A549 (cell line): ENCODE measurements at regions of chr16 and their contacts with region 1.

Region 1: GRCh38 chr16:67928561-67929364 is 2.9 kb downstream of the CTRL start:
- DNase-seq: peak; percentile 66 to 91
- ATAC-seq: peak; percentile 70 to 88
- H3K4me3 ChIP-seq: no peak overlapping the region
- H3K27ac ChIP-seq: no peak overlapping the region
- H3K4me1 ChIP-seq: no peaks in the 10 kb centered on the region
- CTCF ChIP-seq: peak; percentile 87
- EP300 ChIP-seq: no peak
- POLR2A ChIP-seq: no peak
- RAD21 ChIP-seq: peak; percentile 80 to 90

Region 2: DNA sequence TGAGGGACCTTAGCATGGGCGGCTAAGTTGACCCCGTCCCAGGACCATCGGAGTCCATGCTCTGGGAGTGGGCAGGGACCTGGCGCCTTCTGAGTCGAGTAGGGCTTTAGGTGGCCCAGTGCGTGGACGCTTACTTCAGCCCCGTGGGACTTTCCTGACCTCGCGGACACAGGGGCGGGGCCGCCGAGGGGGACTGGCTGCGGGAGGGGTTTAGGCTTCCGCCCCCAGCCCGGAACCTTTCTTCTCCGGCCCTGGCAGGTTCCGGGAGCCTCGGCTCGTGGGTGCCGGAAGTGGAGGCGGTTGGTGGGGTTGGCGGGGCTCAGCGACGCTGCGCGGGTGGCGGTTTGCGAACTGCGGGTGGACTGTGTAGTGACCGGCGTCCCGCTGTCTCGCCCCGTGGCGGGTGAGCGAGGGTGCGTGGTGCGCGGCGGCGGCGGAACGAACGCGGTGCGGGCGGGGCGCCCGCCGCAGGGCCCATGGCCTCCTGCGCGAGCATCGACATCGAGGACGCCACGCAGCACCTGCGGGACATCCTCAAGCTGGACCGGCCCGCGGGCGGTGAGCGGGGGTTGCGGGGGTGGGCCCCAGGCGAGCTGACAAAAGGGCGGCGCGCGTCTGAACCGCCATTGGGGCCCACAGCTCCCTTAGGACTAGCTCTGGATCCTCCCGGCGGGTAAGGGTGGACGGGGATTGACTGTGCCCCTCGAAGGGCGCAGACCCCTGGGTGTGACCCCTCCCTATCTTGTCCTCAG is 55.8 kb before region 1 on chr16 and contains the start of gene EDC4:
- CTCF ChIA-PET with region 1: interaction called, 370 read pairs
- POLR2A ChIA-PET with region 1: no interaction called
- DNase-seq: peak; percentile 83 to 89
- ATAC-seq: peak; percentile 87 to 92
- H3K4me3 ChIP-seq: peak within 1 kb of the TSS; percentile 99
- H3K27ac ChIP-seq: peak within 1 kb of the TSS; percentile 95 to 97
- H3K4me1 ChIP-seq: peaks cover 24% of the 10 kb centered on the region; the same call in 2 of the 3 replicates
- CTCF ChIP-seq: no peak
- EP300 ChIP-seq: peak in 1 of 2 experiments; percentile 7; a peak in 1 of 5 replicates
- POLR2A ChIP-seq: peak; percentile 83
- RAD21 ChIP-seq: no peak
- polyA plus RNA-seq, gene EDC4: 21.0 and 35.3 TPM in 2 replicates

Region 3: DNA sequence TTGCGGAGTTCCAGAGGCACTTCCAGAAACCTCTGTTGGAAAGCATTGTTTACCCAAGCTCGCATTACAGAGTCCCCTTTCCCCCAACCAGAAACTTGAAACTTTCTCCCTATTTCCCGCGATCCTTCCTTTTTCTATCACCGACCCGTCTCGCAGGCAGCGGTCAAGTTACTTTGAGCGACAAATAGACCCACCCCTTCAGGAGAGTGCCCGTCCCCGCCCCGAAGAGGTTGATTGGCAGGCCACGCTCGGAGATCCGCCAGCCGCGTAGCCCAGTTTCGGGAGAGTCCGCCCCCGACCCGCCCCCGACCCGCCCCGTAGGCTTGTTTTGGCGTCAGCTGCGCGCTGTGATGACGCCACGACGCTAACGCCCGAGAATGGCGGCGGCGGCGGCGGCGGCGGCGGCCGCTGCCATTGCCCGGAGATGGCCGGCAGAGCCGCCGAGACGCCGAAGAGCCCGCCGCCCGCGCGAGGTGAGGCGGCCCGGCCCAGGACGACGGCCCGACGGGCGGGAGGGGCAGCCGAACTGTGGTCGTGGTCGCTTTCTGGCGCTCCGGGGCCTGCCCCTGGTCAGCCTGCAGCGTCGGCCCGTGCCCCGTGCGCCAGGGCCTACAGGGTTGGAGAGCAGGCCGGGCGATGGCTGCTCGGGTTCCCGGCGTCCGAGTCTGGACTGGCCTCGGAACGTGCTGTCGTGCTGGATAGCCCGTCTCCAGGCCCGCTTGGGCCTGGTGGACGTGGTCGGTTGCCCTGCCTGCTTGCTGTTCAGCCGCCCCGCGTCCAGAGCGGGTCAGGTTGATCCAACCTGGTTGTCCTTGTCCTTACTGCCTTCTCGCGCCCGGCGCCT is 35.6 kb before region 1 on chr16 and contains the start of gene PSKH1:
- CTCF ChIA-PET with region 1: interaction called, 370 read pairs
- POLR2A ChIA-PET with region 1: no interaction called
- DNase-seq: peak; percentile 95 to 99
- ATAC-seq: peak; percentile 98
- H3K4me3 ChIP-seq: peak within 1 kb of the TSS; percentile 98
- H3K27ac ChIP-seq: peak within 1 kb of the TSS; percentile 90 to 94
- H3K4me1 ChIP-seq: peaks cover 11% of the 10 kb centered on the region; the same call in 2 of the 3 replicates
- CTCF ChIP-seq: no peak
- EP300 ChIP-seq: no peak
- POLR2A ChIP-seq: peak; percentile 44
- RAD21 ChIP-seq: no peak
- polyA plus RNA-seq, gene PSKH1: 15.1 and 18.2 TPM in 2 replicates

Region 4: DNA sequence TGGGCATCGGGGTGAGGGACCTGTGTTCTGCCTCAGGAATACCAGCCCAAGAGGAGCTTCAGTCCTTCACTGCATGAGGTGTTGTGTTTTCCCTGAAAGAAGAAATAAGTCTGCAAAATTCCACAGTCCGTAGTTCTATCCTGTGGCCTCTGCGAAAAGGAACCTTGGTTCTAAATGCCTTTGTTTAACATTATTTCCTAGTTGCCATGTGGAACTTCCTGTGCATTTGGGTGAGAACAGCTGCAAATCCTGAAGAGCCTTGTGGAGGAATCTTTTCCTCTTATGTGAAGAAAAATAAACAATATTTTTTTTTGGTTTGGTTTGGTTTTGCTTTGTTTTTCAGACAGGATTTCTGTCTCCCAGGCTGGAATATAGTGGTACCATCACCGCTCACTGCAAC is 25.9 kb before region 1 on chr16:
- CTCF ChIA-PET with region 1: interaction called, 14 read pairs
- POLR2A ChIA-PET with region 1: no interaction called
- DNase-seq: no peak
- ATAC-seq: no peak
- H3K4me3 ChIP-seq: no peak overlapping the region
- H3K27ac ChIP-seq: no peak overlapping the region
- H3K4me1 ChIP-seq: no peaks in the 10 kb centered on the region
- CTCF ChIP-seq: no peak
- EP300 ChIP-seq: no peak
- POLR2A ChIP-seq: no peak
- RAD21 ChIP-seq: no peak

Region 5: DNA sequence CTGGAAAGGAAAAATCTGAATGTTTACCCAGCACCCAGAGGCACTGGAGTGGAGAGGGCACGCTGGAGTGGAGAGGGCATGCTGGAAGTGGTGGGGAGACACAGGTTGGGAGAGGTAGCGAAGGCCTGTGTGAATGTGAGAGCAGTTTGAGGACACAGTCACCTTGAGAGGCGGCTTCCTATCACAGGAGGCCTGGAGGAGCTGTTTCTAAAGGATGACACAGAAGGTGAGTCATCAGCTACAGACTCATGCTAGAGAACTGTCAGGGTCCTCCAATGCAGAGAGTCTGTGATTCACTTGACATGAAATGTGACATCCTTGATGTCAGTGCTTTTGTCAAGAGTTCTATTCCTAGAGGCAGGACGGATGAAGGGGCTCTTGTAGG is 10.9 kb before region 1 on chr16:
- CTCF ChIA-PET with region 1: interaction called, 46 read pairs
- POLR2A ChIA-PET with region 1: no interaction called
- DNase-seq: peak; percentile 62 to 88
- ATAC-seq: peak; percentile 89 to 90
- H3K4me3 ChIP-seq: no peak overlapping the region
- H3K27ac ChIP-seq: peak overlapping the region in 1 of 2 experiments; percentile 2; a peak in 1 of 6 replicates
- H3K4me1 ChIP-seq: peaks cover 16% of the 10 kb centered on the region
- CTCF ChIP-seq: no peak
- EP300 ChIP-seq: no peak
- POLR2A ChIP-seq: no peak
- RAD21 ChIP-seq: no peak